ENCODE measurements at regions of chr5 and their contacts with region 1.

Region 1: GRCh38 chr5:82351754-82352145 is 73.6 kb upstream of the RPS23 start:
- DNase-seq: peak; percentile 80

Region 2: GRCh38 chr5:82641331-82642003 is 289.7 kb after region 1 on chr5:
- in situ Hi-C with region 1: loop called (anchors 25 kb)
- DNase-seq: peak; percentile 93

Region 3: GRCh38 chr5:83473346-83474163 is 1121.8 kb after region 1 on chr5:
- in situ Hi-C with region 1: loop called (anchors 25 kb)
- DNase-seq: peak; percentile 97

Region 4: DNA sequence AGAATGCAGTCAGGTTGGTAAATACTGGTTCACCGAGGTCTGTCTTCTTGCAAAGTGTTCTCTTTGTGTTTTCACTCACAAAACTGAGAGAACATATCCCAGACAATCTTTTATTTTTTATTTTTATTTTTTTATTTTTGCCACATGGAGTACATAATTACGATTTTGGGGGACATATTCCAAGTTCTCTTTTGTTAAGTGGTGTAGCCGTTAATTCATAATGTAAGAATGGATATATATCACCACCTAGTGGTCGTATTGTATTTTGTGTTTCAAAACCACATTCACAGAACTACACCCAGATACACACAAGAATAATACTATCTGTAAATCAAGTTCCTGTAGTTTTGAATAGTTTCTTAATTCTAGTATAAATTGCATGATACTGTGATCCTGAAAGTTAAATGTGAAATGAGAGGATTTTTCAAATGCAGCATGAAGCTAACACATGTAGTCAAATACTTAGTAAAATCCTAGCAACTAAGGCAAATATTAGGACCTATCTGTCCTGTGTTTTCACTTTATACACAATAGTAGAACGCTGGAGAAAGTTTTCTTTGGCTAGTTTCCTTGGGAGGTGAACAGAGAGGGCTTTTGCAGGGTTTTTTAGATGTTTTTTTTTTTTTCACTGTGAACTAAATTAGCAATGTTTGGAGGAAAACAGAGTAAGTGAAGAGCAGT is 1212.5 kb after region 1 on chr5:
- in situ Hi-C with region 1: loop called (anchors 25 kb)
- DNase-seq: peak; percentile 75